ENCODE measurements at regions of chr7 and their contacts with region 1.

Region 1: DNA sequence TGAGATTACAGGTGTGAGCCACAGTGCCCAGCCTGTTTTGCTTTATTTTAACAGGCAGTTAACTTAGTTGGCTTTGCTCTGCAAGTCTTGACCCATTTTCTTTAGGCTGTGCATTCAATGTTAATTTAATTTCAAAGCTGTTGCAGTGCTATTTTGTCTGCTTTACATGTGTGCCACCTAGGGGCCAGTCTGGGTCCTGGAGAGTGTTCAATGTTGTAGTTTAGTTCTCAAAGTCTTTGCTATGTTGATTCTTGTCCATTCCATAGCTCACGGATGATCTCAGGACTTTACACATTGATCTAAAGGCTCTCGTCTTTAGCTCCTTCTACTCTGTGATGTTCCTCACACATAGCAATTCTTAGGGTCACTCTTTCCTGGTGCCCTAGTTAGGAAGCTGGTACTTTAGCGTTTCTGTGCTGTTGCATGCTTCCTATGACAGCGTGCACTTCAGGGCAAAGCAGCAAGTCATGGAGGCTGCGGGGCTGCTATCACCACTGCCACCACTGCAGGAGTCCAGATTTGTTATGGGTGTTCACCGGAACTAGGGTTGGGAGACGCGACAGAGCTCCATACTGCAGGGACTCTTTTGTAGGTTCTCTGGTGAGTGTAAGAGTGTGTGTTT is 16.4 kb upstream of the ABCA13 start:
- DNase-seq: peak; percentile 48 to 66
- ATAC-seq: peak; percentile 90 to 97
- H3K4me3 ChIP-seq: no peak overlapping the region
- H3K27ac ChIP-seq: no peak overlapping the region
- H3K4me1 ChIP-seq: peaks cover 4% of the 10 kb centered on the region; the same call in 1 of the 3 replicates
- CTCF ChIP-seq: peak; percentile 79
- EP300 ChIP-seq: no peak
- POLR2A ChIP-seq: no peak
- RAD21 ChIP-seq: peak; percentile 87 to 94

Region 2: DNA sequence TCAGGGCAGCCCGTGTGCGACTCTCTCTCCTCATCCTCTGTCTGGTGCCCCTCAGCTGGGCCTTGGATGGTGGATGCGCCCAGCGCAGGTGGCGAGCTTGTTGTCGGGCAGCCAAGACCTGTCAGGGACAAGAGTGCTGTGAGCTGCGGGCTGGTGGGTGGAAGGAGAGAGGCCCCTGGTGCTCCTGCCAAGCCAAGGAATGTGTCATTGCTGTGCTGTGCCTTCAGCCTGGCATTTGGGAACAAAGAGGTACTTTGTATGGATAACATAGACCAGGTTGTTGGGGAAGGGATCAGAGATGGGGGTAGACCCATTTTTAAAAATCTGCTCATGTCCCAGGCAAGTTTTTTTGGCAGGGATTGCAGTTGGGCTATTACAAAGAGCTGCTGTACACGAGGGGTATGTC is 327.5 kb before region 1 on chr7:
- CTCF ChIA-PET with region 1: no interaction called
- POLR2A ChIA-PET with region 1: no interaction called
- DNase-seq: no peak
- ATAC-seq: no peak
- H3K4me3 ChIP-seq: no peak overlapping the region
- H3K27ac ChIP-seq: no peak overlapping the region
- H3K4me1 ChIP-seq: no peaks in the 10 kb centered on the region
- CTCF ChIP-seq: no peak
- EP300 ChIP-seq: no peak
- POLR2A ChIP-seq: no peak
- RAD21 ChIP-seq: no peak

Region 3: DNA sequence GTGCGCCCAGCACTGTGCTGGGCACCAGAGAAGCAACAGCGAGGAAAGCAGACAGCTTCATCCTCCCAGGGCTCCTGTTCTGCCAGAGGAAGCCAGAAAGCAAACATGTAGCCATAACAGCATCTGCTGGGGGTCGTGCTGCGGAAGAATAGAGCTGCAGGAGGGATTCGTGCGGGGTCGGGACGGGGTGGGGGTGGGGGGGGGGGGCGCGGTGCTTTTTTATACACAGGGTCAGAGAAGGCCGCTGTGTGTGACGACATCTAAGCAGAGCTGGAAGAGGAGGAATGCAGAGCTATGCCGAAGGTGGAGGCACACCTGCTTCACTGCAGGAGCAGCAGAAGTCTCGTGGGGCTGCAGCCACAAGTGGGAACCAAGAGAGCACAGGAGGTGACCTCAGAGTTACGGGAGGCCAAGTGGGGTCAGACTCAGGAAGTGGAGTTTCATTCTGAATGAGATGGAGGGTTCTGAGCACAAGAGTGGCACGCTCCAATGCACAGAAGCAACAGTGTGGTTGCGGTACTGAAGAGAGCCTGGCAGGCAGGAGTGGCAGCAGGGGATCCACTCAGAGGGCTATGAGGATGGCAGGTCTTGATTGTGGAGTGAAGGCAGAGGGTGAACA is 217.7 kb before region 1 on chr7:
- CTCF ChIA-PET with region 1: interaction called, 10 read pairs
- POLR2A ChIA-PET with region 1: interaction called, 5 read pairs
- DNase-seq: no peak
- ATAC-seq: no peak
- H3K4me3 ChIP-seq: no peak overlapping the region
- H3K27ac ChIP-seq: no peak overlapping the region
- H3K4me1 ChIP-seq: peaks cover 13% of the 10 kb centered on the region
- CTCF ChIP-seq: no peak
- EP300 ChIP-seq: no peak
- POLR2A ChIP-seq: no peak
- RAD21 ChIP-seq: no peak

Region 4: GRCh38 chr7:47991741-47992311 is 163.1 kb before region 1 on chr7:
- CTCF ChIA-PET with region 1: interaction called, 26 read pairs
- POLR2A ChIA-PET with region 1: no interaction called
- DNase-seq: peak; percentile 52 to 74
- ATAC-seq: peak; percentile 95 to 100
- H3K4me3 ChIP-seq: no peak overlapping the region
- H3K27ac ChIP-seq: no peak overlapping the region
- H3K4me1 ChIP-seq: no peaks in the 10 kb centered on the region
- CTCF ChIP-seq: peak; percentile 55
- EP300 ChIP-seq: no peak
- POLR2A ChIP-seq: no peak
- RAD21 ChIP-seq: peak; percentile 82 to 91

Region 5: GRCh38 chr7:48139459-48139858 is 15.4 kb before region 1 on chr7:
- CTCF ChIA-PET with region 1: interaction called, 40 read pairs
- POLR2A ChIA-PET with region 1: no interaction called
- DNase-seq: peak; percentile 16 to 68
- ATAC-seq: peak; percentile 47 to 79; a peak in 4 of 6 replicates
- H3K4me3 ChIP-seq: no peak overlapping the region
- H3K27ac ChIP-seq: peak overlapping the region in 1 of 2 experiments; percentile 48; a peak in 3 of 6 replicates
- H3K4me1 ChIP-seq: peaks cover 27% of the 10 kb centered on the region
- CTCF ChIP-seq: peak; percentile 39
- EP300 ChIP-seq: no peak
- POLR2A ChIP-seq: no peak
- RAD21 ChIP-seq: peak; percentile 43 to 61; a peak in 4 of 5 replicates

Region 6: GRCh38 chr7:48213226-48213625 is 58.3 kb after region 1 on chr7:
- CTCF ChIA-PET with region 1: no interaction called
- POLR2A ChIA-PET with region 1: no interaction called
- DNase-seq: no peak
- ATAC-seq: no peak
- H3K4me3 ChIP-seq: no peak overlapping the region
- H3K27ac ChIP-seq: no peak overlapping the region
- H3K4me1 ChIP-seq: no peaks in the 10 kb centered on the region
- CTCF ChIP-seq: no peak
- EP300 ChIP-seq: no peak
- POLR2A ChIP-seq: no peak
- RAD21 ChIP-seq: no peak